ENCODE measurements at regions of chr10 and their contacts with region 1.

Region 1: GRCh38 chr10:60572511-60573194 is 183.0 kb upstream of the ANK3 start:
- DNase-seq: no peak
- ATAC-seq: peak; percentile 58 to 70 (median 65)
- H3K4me3 ChIP-seq: peak overlapping the region; percentile 61
- H3K27ac ChIP-seq: peak overlapping the region; percentile 75
- H3K4me1 ChIP-seq: peaks cover 14% of the 10 kb centered on the region
- H3K27me3 ChIP-seq: no peaks in the 10 kb centered on the region
- CTCF ChIP-seq: no peak

Region 2: GRCh38 chr10:60444494-60445064 is 128.1 kb before region 1 on chr10:
- intact Hi-C with region 1: loop called in 1 of 2 experiments (anchors 10 kb)
- DNase-seq: no peak
- ATAC-seq: no peak
- H3K4me3 ChIP-seq: no peak overlapping the region
- H3K27ac ChIP-seq: no peak overlapping the region
- H3K4me1 ChIP-seq: peaks cover 18% of the 10 kb centered on the region
- H3K27me3 ChIP-seq: no peaks in the 10 kb centered on the region
- CTCF ChIP-seq: peak; percentile 53

Region 3: DNA sequence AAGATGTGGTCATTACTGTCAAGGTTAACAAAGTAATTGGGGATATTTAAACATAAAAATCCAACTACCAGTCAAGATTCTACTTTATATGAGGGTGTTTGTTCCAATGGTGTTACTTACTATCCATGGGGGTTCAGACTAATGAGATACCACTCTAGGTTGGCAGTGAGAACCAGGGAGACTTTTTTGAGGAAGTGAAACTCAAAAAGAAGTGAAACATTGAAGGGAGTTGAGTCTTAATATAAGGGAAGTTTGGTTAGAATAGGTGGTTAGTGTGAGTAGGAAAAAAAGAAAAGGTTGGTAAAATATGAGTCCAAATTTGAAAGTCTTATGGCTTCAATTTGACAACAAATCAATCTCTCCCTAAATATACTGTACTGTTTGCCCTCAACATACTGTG is 59.4 kb before region 1 on chr10:
- intact Hi-C with region 1: no loop called
- DNase-seq: no peak
- ATAC-seq: no peak
- H3K4me3 ChIP-seq: no peak overlapping the region
- H3K27ac ChIP-seq: no peak overlapping the region
- H3K4me1 ChIP-seq: peaks cover 3% of the 10 kb centered on the region
- H3K27me3 ChIP-seq: no peaks in the 10 kb centered on the region
- CTCF ChIP-seq: no peak